ENCODE measurements at regions of chr2 and their contacts with region 1.

Region 1: GRCh38 chr2:119659601-119660342 is 19.2 kb upstream of the TMEM177 start:
- DNase-seq: peak; percentile 62
- H3K4me3 Mint-ChIP-seq: no peak overlapping the region
- H3K27ac Mint-ChIP-seq: no peak overlapping the region
- H3K4me1 Mint-ChIP-seq: no peaks in the 10 kb centered on the region
- H3K27me3 Mint-ChIP-seq: peaks cover 20% of the 10 kb centered on the region
- CTCF ChIP-seq: peak; percentile 86

Region 2: DNA sequence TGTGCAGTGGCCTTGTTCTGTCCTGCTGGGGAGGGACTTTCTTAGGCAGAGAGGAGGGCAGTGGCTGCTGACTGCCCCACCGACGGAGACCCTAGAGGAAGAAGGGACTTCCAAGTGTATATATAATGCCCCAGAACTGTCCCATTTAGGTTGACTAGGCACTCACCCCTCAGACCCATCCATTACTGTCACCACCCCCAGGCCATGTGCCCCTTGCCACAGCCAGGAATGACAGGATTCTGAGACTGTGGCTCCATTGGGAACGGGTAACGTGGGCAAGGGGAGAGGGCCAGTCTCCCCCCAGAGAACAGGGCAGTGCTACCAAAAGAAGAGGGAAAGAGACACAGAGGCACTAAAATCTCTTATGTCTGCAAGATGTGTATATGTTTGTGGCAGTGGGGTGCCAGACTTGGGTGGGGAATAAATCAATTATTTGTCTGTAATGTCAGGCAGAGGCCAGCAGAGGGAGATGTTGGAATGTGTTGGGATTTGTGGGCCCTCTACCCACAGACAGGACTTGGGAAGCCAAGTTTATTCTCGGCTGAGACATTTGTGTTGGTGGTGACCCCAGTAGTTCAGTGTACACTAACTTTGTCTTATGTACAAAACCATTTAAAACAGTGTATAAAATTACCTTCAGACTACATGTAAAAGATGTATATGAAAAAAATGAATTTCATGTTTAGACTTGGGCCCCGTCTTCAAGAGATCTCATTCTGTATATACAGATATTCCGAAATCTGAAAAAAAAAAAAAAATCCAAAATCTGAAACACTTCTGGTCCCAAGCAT is 252.1 kb before region 1 on chr2:
- CTCF ChIA-PET with region 1: interaction called, 20 read pairs
- POLR2A ChIA-PET with region 1: no interaction called
- intact Hi-C with region 1: loop called (anchors 1 kb)
- DNase-seq: peak; percentile 64
- H3K4me3 Mint-ChIP-seq: no peak overlapping the region
- H3K27ac Mint-ChIP-seq: no peak overlapping the region
- H3K4me1 Mint-ChIP-seq: peaks cover 6% of the 10 kb centered on the region
- H3K27me3 Mint-ChIP-seq: no peaks in the 10 kb centered on the region
- CTCF ChIP-seq: peak; percentile 66

Region 3: GRCh38 chr2:119517433-119517832 is 142.3 kb before region 1 on chr2:
- CTCF ChIA-PET with region 1: no interaction called
- POLR2A ChIA-PET with region 1: no interaction called
- intact Hi-C with region 1: loop called (anchors 1 kb)
- DNase-seq: peak; percentile 63
- H3K4me3 Mint-ChIP-seq: no peak overlapping the region
- H3K27ac Mint-ChIP-seq: no peak overlapping the region
- H3K4me1 Mint-ChIP-seq: no peaks in the 10 kb centered on the region
- H3K27me3 Mint-ChIP-seq: peaks cover 20% of the 10 kb centered on the region
- CTCF ChIP-seq: peak; percentile 38